Heart right ventricle (tissue), 16 donors: ENCODE measurements at regions of chr22 and their contacts with region 1.

Region 1: GRCh38 chr22:49861642-49862495 is 8.2 kb downstream of the ZBED4 start:
- DNase-seq: no peak
- ATAC-seq: peak in 4 of 8 donors; percentile 7 to 36 (median 18)
- H3K4me3 ChIP-seq: no peak overlapping the region
- H3K27ac ChIP-seq: peak overlapping the region in 1 of 10 donors; percentile 40
- H3K4me1 ChIP-seq: peaks cover 0 to 28% (median 0%) of the 10 kb centered on the region in 9 donors
- H3K27me3 ChIP-seq: no peaks in the 10 kb centered on the region
- CTCF ChIP-seq: no peak

Region 2: DNA sequence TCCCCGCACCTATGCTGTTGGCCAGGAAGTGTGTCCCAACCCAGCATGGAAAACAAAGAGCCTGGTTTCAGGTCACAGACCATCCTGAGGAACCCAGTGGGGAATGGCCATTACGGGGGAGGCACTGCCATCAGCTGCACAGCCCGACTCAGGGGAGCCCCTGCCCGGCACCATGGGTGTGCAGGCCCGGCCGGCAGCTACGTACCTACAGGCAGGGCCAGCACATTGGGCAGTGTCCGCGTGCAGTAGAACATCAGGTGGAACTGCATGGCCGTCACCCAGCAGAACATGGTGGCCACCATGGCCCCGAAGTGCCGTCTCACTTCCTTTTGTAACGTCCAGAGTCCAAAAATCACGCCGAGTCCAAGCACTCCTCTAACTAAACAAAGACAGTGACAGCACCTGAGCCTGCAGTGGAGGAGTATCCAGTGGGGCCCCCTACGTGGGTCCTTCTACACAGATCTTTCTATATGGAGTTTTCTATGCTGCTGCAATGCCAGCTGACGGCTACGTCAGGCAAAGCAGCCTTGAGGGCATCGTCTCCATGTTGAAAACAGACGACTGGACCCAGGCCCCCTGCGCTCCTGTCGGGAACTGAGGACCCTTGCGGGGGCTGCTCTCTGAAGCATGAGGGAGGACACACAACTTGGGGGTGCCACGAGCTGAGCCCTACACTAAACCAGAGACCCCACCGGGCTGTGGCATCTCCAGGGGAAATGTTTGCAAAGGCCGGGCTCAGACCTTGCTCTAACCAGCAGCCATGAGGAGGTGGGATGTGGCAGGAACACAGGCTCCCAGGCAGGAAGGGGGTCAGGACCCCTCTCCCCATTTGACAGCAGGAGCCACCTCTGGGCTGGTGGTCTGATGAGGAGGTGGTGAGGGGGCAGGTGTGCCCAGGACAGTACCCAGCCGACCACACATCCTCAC is 48.6 kb after region 1 on chr22:
- intact Hi-C with region 1: loop called in 2 of 10 experiments (anchors 5 kb)
- DNase-seq: no peak
- ATAC-seq: no peak
- H3K4me3 ChIP-seq: no peak overlapping the region
- H3K27ac ChIP-seq: no peak overlapping the region
- H3K4me1 ChIP-seq: no peaks in the 10 kb centered on the region
- H3K27me3 ChIP-seq: no peaks in the 10 kb centered on the region
- CTCF ChIP-seq: no peak